Activated CD8-positive, alpha-beta T cell treated with anti-CD3 and anti-CD28 coated beads, Interleukin-2, amount 10 ng/mL, durations not matched to agents 7 days and 5 days (primary cell): ENCODE measurements at regions of chr20 and their contacts with region 1.

Region 1: GRCh38 chr20:50491926-50492634 is 18.1 kb upstream of the PTPN1 start:
- DNase-seq: no peak
- ATAC-seq: no peak
- H3K4me3 Mint-ChIP-seq: no peak overlapping the region
- H3K27ac Mint-ChIP-seq: no peak overlapping the region
- H3K4me1 Mint-ChIP-seq: peaks cover 15% of the 10 kb centered on the region
- H3K27me3 Mint-ChIP-seq: peaks cover 6% of the 10 kb centered on the region

Region 2: DNA sequence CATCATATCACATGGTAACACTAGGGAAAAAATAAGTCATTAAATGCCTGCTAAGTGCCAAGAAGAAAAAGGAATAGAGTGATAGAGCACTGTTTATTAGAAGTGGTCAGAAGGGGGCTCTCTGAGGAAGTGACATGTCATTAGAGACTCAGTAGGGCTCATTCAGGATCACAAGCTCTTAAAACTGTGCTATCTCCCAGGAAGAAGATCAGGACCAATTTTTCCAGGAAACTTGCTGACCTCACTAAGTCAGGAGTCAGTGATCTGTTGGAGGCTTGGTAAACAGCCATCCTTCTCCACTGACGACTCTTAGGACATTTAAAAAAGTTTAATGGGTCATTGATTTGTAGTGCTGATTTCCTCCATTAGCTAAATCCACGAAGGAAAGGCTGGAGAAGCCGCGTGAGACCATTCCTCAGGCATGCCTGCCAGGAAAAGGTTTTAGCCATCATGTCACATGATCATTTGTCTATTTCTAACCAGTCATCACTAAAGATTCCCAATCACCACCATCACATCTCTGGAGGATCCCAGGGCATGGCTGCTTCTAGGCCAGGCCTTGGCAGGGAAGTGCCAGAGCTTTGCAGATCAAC is 12.2 kb after region 1 on chr20:
- CTCF ChIA-PET with region 1: interaction called, 16 read pairs
- POLR2A ChIA-PET with region 1: no interaction called
- DNase-seq: no peak
- ATAC-seq: no peak
- H3K4me3 Mint-ChIP-seq: no peak overlapping the region
- H3K27ac Mint-ChIP-seq: no peak overlapping the region
- H3K4me1 Mint-ChIP-seq: peaks cover 18% of the 10 kb centered on the region
- H3K27me3 Mint-ChIP-seq: no peaks in the 10 kb centered on the region